Right ventricle myocardium inferior (tissue), 1 donor: ENCODE measurements at regions of chr11 and their contacts with region 1.

Region 1: DNA sequence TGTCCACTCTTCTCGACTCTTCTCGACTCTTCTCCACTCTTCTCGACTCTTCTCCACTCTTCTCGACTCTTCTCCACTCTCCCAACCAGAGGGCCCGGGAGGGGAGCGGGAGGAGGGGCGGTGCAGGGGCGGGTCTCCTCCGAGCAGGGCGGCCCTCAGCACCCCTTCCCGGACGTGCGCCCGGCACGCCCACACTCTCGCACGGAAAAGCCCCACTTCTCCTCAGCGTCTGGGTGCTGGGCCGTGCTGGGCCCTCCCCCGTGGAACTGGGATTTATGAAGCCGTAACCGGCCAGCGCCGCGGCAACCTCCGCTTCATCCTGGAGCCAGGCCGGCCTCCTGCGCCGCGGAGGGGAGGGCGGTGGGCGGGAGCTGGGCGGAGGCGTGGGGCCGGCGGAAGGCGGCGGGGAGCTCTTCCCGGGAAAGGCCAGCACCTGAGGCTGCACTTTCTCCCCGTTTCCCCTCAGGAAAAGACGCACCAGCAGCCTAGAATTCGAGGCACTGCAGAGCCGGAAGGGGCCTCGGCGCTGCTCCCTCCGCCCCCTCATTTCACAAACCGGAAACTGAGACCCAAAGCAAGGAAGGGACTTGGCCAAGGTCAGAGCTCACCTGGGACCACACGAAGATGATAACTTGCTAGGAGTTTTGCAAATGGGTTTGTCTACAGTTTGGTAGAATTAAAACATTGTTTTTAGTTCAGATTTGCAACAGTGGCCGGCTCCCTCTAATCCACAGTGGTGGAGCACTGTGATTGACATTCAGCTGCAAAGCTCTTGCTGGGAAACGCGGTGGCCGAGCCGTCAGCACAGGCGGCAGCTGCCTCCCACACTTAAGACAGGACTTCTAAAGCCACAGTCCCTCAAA is 31.6 kb upstream of the JAM3 start:
- DNase-seq: peak; percentile 85
- ATAC-seq: peak; percentile 66

Region 2: GRCh38 chr11:133988686-133989410 is 48.4 kb before region 1 on chr11:
- intact Hi-C with region 1: loop called (anchors 2 kb)
- DNase-seq: peak; percentile 86
- ATAC-seq: peak; percentile 93